ENCODE measurements at regions of chr20 and their contacts with region 1.

Region 1: GRCh38 chr20:35303735-35304491 is 11.7 kb upstream of the FAM83C start:
- DNase-seq: peak; percentile 87
- H3K4me3 ChIP-seq: no peak overlapping the region
- H3K27ac ChIP-seq: peak overlapping the region; percentile 82
- H3K4me1 ChIP-seq: peaks cover 67% of the 10 kb centered on the region
- H3K27me3 ChIP-seq: no peaks in the 10 kb centered on the region
- CTCF ChIP-seq: peak; percentile 93 to 95
- POLR2A ChIP-seq: no peak

Region 2: DNA sequence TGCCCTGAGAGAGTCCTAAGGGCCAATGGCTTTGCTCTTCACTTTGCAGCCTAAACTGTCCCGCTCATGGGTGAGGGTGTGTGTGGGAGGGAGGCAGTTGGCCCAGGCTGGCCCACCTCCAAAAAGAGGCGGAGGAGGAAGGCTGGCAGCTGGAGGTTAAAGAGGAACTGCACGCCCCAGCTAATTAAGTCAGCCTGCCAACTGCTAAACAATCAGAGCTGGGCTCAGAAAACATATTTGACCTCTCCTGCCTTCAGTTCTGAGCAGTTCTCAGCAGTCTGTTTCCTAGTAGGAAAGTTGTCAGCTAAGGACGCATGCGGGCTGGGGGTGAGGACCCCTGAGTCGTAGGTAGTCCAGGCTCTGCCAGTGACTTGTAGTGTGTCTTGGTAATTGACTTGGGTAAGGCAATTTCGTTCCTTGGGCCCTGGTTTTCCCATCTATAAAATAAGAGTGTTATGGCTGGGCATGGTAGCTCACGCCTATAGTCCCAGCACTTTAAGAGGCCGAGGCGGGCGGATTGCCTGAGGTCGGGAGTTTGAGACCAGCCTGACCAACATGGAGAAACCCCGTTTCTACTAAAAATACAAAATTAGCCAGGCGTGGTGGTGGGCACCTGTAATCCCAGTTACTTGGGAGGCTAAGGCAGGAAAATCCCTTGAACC is 365.3 kb before region 1 on chr20:
- CTCF ChIA-PET with region 1: no interaction called
- POLR2A ChIA-PET with region 1: no interaction called
- dilution Hi-C with region 1: no loop called
- intact Hi-C with region 1: no loop called
- DNase-seq: peak; percentile 81
- H3K4me3 ChIP-seq: no peak overlapping the region
- H3K27ac ChIP-seq: no peak overlapping the region
- H3K4me1 ChIP-seq: peaks cover 13% of the 10 kb centered on the region
- H3K27me3 ChIP-seq: no peaks in the 10 kb centered on the region
- CTCF ChIP-seq: no peak
- POLR2A ChIP-seq: no peak

Region 3: GRCh38 chr20:35171753-35172433 is 132.0 kb before region 1 on chr20 and contains the start of gene PROCR:
- CTCF ChIA-PET with region 1: no interaction called
- POLR2A ChIA-PET with region 1: no interaction called
- dilution Hi-C with region 1: no loop called
- intact Hi-C with region 1: loop called (anchors 1 kb)
- DNase-seq: peak; percentile 98
- H3K4me3 ChIP-seq: peak within 1 kb of the TSS; percentile 70 to 93 (median 80)
- H3K27ac ChIP-seq: peak within 1 kb of the TSS; percentile 79
- H3K4me1 ChIP-seq: peaks cover 37% of the 10 kb centered on the region
- H3K27me3 ChIP-seq: no peaks in the 10 kb centered on the region
- CTCF ChIP-seq: no peak
- POLR2A ChIP-seq: peak; percentile 98
- total RNA-seq, gene PROCR: 228 and 251 TPM in 2 replicates

Region 4: DNA sequence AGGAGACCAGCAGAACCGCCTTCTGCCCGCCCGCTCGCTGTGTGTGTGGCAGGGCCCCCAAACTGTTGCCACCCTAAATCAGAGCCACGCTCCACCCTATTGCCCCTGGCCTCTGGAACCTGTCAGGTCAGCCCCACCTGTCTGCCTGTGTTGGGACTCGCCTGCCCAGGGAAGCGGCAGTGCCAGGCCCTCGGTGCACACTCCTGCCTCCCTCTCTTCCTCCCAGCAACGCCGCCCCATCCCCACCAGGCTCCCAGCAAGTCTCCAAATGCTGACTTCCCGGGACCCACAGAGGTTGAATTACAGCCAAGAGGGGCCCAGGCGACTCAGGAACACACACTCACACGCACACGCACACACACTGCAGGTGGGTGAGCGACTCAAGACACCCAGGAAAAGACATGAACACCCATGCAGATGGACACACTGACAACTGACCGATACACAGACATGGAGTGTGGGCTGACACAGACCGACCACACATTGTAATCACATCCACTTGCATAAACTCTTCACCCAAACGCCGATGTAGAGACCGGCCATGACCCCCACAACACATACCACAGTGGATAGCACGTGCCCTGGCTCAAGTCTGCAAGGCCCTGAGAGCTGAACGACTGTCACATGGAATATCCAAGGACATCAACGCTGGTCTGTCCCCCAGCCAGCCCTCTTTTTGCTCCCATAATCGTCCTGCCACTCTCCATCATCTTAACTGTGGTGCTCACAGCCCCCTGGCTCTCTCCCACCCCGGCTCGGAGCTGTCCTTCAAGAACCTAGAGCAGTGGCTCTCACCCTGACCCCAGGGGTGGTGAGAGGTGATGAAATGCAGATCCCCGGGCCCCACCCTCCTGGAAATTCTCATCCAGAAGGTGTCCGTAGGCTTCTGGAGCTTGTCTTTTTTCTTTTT is 11.3 kb before region 1 on chr20 and contains the start of gene FAM83C:
- CTCF ChIA-PET with region 1: interaction called, 24 read pairs
- POLR2A ChIA-PET with region 1: no interaction called
- dilution Hi-C with region 1: no loop called
- intact Hi-C with region 1: no loop called
- DNase-seq: no peak
- H3K4me3 ChIP-seq: no peak within 1 kb of the TSS
- H3K27ac ChIP-seq: no peak within 1 kb of the TSS
- H3K4me1 ChIP-seq: peaks cover 5% of the 10 kb centered on the region
- H3K27me3 ChIP-seq: peaks cover 0 to 2% of the 10 kb centered on the region in 2 experiments
- CTCF ChIP-seq: no peak
- POLR2A ChIP-seq: no peak
- total RNA-seq, gene FAM83C: not detected in 2 replicates

Region 5: DNA sequence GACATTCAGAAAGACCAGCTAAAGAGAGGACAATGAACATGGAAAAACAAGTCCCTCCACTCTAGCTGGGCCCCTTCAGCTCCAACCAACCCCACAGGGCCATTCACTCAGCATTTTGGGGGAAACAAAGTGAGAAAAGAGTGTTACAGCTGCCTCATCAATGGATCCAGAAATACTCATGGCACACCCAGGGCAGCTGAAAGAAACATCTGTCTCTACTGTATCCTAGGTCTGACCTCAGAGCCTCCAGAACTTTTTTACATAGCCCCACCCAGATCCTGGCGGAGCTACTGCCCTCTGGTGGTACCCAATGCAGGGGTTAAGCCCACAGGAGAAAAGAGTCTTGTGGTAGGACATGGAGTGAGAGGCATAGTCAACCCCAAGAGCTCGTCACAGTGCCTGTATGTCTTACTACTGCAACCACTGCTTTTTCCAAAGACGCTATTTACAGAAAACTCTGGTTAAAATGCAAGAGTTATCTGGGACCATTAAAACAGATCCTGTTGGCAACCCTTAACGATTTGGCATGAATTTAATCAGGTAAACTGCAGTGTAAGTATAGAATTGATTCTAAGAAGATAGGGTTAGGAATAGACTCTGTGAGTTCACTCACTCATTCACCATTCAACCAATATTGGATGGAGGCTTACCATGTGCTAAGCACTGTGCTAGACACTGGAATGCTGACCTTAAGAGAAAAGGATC is 25.7 kb after region 1 on chr20:
- CTCF ChIA-PET with region 1: interaction called, 182 read pairs
- POLR2A ChIA-PET with region 1: no interaction called
- dilution Hi-C with region 1: no loop called
- intact Hi-C with region 1: loop called (anchors 1 kb)
- DNase-seq: no peak
- H3K4me3 ChIP-seq: no peak overlapping the region
- H3K27ac ChIP-seq: no peak overlapping the region
- H3K4me1 ChIP-seq: peaks cover 38% of the 10 kb centered on the region
- H3K27me3 ChIP-seq: no peaks in the 10 kb centered on the region
- CTCF ChIP-seq: peak; percentile 58 to 69
- POLR2A ChIP-seq: no peak

Region 6: DNA sequence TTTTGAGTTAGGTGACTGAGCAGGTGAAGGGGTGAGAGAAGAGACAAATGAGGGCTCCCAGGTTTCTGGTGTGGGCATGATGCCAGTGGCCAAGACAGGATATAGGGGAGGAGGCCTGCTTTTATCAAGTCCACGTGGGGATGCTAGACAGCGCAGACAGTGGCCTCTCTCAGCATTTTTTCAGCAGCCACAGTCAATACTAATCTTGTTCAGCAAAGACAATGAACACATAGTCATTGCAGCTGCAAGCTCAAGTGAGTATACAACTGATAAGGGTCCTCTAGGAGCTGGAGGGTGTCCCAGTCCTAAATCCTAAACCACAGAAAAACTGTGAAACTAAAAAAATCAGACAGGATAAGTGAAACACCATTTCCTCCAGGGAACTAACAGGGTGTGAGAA is 59.3 kb after region 1 on chr20:
- CTCF ChIA-PET with region 1: interaction called, 12 read pairs
- POLR2A ChIA-PET with region 1: no interaction called
- dilution Hi-C with region 1: no loop called
- intact Hi-C with region 1: no loop called
- DNase-seq: no peak
- H3K4me3 ChIP-seq: no peak overlapping the region
- H3K27ac ChIP-seq: no peak overlapping the region
- H3K4me1 ChIP-seq: no peaks in the 10 kb centered on the region
- H3K27me3 ChIP-seq: no peaks in the 10 kb centered on the region
- CTCF ChIP-seq: no peak
- POLR2A ChIP-seq: no peak